Calu3 (cell line): ENCODE measurements at regions of chr9 and their contacts with region 1.

Region 1: DNA sequence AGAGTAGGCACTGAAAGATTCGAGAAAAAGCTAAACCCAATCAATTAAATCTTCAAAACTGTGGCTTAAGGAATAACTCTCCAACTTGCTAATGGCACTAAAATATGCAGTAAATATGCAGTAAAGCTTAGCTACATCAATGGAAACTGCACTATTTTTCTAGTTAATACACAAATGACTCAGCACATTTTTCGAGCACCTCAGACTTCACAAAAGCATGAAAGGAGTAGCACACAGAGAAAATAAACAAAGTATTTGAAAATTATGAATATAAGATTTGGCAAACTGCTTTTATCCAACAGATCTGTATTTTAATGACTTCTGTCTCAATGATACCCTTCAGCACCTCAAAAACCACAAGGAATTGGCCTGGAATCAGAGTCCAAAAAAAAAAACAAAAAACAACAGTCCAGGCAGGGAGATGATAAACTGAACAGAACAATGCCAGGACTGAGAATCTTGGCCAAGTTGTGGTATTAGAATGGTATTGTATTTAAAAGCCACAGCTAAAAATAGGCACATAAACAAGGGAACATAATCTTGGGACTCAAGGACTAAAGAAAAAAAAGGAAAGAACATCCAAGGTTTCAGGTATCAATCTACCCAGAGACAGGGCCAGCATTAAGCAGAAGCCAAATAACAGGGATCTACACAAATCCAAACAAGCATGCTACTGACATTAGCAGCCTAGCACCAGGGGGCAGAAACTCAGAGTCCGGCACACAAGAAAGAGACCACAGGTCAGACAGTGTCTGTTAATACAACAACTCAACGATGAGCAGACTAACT is 21.4 kb downstream of the TMEM245 start:
- DNase-seq: no peak
- H3K4me3 Mint-ChIP-seq: no peak overlapping the region
- H3K27ac Mint-ChIP-seq: peak overlapping the region; percentile 50
- H3K4me1 Mint-ChIP-seq: peaks cover 66% of the 10 kb centered on the region
- H3K27me3 Mint-ChIP-seq: no peaks in the 10 kb centered on the region
- CTCF ChIP-seq: no peak

Region 2: DNA sequence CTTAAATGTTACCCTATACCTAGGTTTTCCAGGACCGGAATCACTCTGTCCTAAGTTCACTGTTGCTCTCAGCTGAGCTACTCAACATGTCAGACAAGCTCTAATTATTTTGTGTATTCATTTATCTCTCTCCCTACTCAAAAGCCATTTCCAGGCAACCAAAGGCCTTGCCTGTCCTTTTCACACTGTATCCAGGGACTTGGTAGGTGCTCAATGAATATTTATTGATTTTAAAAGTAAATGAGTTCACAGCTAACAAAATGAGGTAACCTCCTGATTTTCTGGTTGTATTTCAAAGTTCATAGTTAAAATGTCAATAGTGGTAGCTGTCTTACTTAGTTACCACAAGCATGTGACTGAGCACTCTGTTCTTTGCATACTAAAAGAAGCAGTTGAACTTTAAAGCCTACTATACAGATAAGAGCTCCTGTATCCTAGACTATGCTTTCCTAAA is 764.8 kb before region 1 on chr9:
- CTCF ChIA-PET with region 1: no interaction called
- intact Hi-C with region 1: no loop called
- DNase-seq: no peak
- H3K4me3 Mint-ChIP-seq: no peak overlapping the region
- H3K27ac Mint-ChIP-seq: no peak overlapping the region
- H3K4me1 Mint-ChIP-seq: no peaks in the 10 kb centered on the region
- H3K27me3 Mint-ChIP-seq: no peaks in the 10 kb centered on the region
- CTCF ChIP-seq: no peak

Region 3: GRCh38 chr9:108634204-108634603 is 464.2 kb before region 1 on chr9:
- CTCF ChIA-PET with region 1: no interaction called
- intact Hi-C with region 1: no loop called
- DNase-seq: peak; percentile 24
- H3K4me3 Mint-ChIP-seq: no peak overlapping the region
- H3K27ac Mint-ChIP-seq: no peak overlapping the region
- H3K4me1 Mint-ChIP-seq: no peaks in the 10 kb centered on the region
- H3K27me3 Mint-ChIP-seq: peaks cover 76% of the 10 kb centered on the region
- CTCF ChIP-seq: no peak

Region 4: DNA sequence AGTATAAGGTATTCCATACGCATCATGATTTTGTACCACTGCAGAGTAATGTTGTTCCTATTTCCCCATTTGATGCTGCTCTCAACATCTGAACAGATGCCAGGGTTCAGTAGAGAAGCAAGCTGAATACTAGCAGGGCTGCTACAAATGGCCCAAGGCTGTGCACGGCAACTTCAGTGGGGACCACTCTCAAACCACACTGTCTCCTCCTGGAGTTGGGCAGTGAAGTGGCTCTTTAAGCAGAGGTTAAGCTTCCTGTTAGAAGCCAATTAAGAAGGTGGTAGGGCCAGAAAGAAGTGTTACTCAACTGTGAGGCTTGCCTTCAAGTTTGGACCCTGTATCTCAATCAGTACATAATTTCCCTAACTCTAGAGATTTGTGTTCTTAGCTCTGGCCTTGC is 10.6 kb before region 1 on chr9:
- CTCF ChIA-PET with region 1: no interaction called
- intact Hi-C with region 1: loop called (anchors 1 kb)
- DNase-seq: no peak
- H3K4me3 Mint-ChIP-seq: no peak overlapping the region
- H3K27ac Mint-ChIP-seq: peak overlapping the region; percentile 61
- H3K4me1 Mint-ChIP-seq: peaks cover 24% of the 10 kb centered on the region
- H3K27me3 Mint-ChIP-seq: no peaks in the 10 kb centered on the region
- CTCF ChIP-seq: no peak

Region 5: GRCh38 chr9:109143881-109144562 is 45.7 kb after region 1 on chr9:
- CTCF ChIA-PET with region 1: no interaction called
- intact Hi-C with region 1: no loop called
- DNase-seq: peak; percentile 25
- H3K4me3 Mint-ChIP-seq: no peak overlapping the region
- H3K27ac Mint-ChIP-seq: no peak overlapping the region
- H3K4me1 Mint-ChIP-seq: no peaks in the 10 kb centered on the region
- H3K27me3 Mint-ChIP-seq: no peaks in the 10 kb centered on the region
- CTCF ChIP-seq: peak; percentile 22

Region 6: GRCh38 chr9:110316261-110317075 is 1218.1 kb after region 1 on chr9:
- CTCF ChIA-PET with region 1: no interaction called
- intact Hi-C with region 1: no loop called
- DNase-seq: no peak
- H3K4me3 Mint-ChIP-seq: no peak overlapping the region
- H3K27ac Mint-ChIP-seq: no peak overlapping the region
- H3K4me1 Mint-ChIP-seq: no peaks in the 10 kb centered on the region
- H3K27me3 Mint-ChIP-seq: no peaks in the 10 kb centered on the region
- CTCF ChIP-seq: no peak